Dorsolateral prefrontal cortex (tissue), 120 donors: ENCODE measurements at regions of chr15 and their contacts with region 1.

Region 1: GRCh38 chr15:67303490-67304363 is 49.1 kb downstream of the IQCH start:
- DNase-seq: no peak
- H3K4me3 ChIP-seq: no peak overlapping the region
- H3K27ac ChIP-seq: no peak overlapping the region
- H3K27me3 ChIP-seq: no peaks in the 10 kb centered on the region
- CTCF ChIP-seq: peak in 52 of 56 donors; percentile 18 to 75 (median 46)

Region 2: GRCh38 chr15:66212563-66212921 is 1091.2 kb before region 1 on chr15:
- intact Hi-C with region 1: no loop called
- DNase-seq: peak in 2 of 10 donors; percentile 37 to 74
- H3K4me3 ChIP-seq: no peak overlapping the region
- H3K27ac ChIP-seq: no peak overlapping the region
- H3K27me3 ChIP-seq: no peaks in the 10 kb centered on the region
- CTCF ChIP-seq: no peak

Region 3: GRCh38 chr15:66946578-66947164 is 357.1 kb before region 1 on chr15:
- intact Hi-C with region 1: loop called (anchors 5 kb)
- DNase-seq: peak in 8 of 10 donors; percentile 37 to 78 (median 63)
- H3K4me3 ChIP-seq: peak overlapping the region in 1 of 59 donors; percentile 7
- H3K27ac ChIP-seq: no peak overlapping the region
- H3K27me3 ChIP-seq: no peaks in the 10 kb centered on the region
- CTCF ChIP-seq: peak; percentile 71 to 99 (median 95)

Region 4: DNA sequence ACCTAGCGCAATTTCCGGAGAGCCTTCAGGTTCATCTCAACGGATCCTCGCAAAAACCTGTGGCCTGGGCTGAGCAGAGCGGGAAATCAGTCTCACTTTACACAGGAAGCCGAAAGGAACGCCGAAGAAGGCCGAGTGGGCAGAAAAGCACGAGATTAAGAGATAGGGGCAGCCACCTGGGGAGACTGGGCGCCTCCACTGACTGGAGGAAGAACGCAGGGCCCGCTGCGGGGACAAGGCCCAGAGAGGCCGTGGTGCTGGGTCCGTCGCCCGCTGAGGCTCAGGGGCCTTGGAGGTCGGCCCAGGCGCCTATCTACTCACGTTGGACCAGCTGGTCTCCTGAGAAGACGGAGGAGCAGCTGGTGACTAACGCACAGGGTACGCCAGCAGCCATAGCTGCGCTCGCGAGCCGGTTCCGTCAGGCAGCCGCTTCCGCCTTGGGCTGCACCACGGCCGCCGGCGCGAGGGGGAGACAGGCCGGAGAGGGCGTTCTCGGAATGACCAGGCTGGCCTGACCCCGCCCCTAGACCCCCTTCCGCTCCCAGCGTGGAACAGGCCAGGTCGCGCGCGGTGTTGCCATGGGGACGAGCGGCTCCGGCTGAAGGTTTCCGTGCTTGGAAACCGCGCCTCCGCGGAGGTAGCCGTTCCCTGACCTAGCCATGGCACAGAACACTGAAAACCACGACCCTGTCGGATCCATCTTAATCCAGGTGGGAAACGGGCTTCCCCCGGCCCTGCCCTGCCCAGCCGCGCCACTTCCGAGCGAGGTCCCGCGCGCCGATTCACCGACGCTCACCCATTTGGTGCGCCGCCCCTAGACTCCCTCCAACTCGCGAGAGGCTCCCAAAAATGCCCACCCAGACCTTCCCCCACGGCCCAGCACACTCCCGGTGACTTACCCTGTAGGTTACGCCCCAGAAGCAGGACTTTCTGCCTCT is 49.2 kb before region 1 on chr15 and contains the starts of genes AAGAB and IQCH:
- intact Hi-C with region 1: no loop called
- DNase-seq: peak; percentile 91 to 99 (median 94)
- H3K4me3 ChIP-seq: peak within 1 kb of the TSS; percentile 59 to 100 (median 92)
- H3K27ac ChIP-seq: peak within 1 kb of the TSS in 53 of 59 donors; percentile 24 to 89 (median 71)
- H3K27me3 ChIP-seq: no peaks in the 10 kb centered on the region
- CTCF ChIP-seq: peak in 35 of 56 donors; percentile 7 to 53 (median 28)
- total RNA-seq, gene AAGAB: 33.8 to 77.3 (median 59.0) TPM
- total RNA-seq, gene IQCH: 1.7 to 10.8 (median 5.0) TPM

Region 5: DNA sequence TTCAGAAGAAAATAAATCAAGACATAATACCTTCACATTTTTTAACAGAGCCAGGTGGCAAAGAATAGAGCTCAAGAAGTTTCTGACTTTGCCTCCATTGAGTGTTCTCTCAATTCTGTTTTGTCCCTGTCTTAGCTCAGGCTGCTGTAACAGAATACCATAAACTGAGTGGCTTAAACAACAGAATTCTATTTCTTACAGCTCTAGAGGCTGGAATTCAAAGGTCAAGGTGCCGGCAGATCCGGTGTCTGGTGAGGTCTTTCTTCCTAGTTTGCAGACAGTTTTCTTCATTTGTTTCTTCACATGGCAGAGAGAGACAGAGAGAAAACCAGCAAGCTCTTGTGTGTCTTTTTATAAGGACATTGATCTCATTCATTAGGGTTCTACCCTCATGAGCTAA is 23.5 kb before region 1 on chr15:
- intact Hi-C with region 1: no loop called
- DNase-seq: no peak
- H3K4me3 ChIP-seq: no peak overlapping the region
- H3K27ac ChIP-seq: no peak overlapping the region
- H3K27me3 ChIP-seq: no peaks in the 10 kb centered on the region
- CTCF ChIP-seq: no peak

Region 6: DNA sequence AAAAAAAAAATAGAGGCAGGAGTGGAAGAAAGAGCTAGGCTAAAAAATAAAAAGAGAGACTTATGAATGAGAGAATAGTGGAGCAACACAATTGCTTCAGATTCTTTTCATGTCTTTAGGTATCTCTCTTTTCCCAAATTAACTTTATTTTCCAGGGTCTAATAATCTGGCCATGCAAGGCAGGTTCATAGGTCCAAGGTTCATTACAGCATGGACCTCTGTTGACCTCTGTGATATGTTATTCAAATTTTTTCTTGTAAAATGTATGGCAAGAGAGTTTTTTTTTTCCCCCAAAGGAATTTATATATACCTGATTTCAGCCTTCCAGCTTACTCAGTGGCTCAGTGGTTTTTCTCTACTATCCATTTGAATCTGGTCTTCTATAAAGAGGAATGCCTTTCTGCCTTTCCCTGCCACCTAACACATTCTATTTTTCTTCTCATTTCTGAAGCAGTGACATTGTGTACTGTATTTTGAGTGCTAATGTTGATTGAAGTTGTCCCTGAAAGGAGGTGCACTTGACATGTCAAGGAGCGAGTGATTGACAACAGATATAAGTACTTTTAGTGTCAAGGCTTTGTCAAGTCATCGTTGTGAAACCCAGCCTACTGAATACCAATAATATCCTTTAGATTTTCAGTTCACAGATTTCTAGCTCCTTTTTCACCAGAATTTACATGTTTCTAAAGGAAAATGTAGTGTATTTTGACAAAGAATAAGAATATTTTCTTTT is 357.3 kb after region 1 on chr15:
- intact Hi-C with region 1: no loop called
- DNase-seq: no peak
- H3K4me3 ChIP-seq: no peak overlapping the region
- H3K27ac ChIP-seq: no peak overlapping the region
- H3K27me3 ChIP-seq: no peaks in the 10 kb centered on the region
- CTCF ChIP-seq: no peak